ENCODE measurements at regions of chr19 and their contacts with region 1.

Region 1: GRCh38 chr19:52853880-52854279 is 3.5 kb downstream of the ZNF468 start:
- DNase-seq: no peak
- ATAC-seq: no peak
- H3K4me3 ChIP-seq: no peak overlapping the region
- H3K27ac ChIP-seq: no peak overlapping the region
- H3K4me1 ChIP-seq: peaks cover 3% of the 10 kb centered on the region
- H3K27me3 ChIP-seq: no peaks in the 10 kb centered on the region
- CTCF ChIP-seq: no peak
- POLR2A ChIP-seq: no peak
- RAD21 ChIP-seq: no peak

Region 2: GRCh38 chr19:52942386-52943133 is 88.7 kb after region 1 on chr19:
- CTCF ChIA-PET with region 1: no interaction called
- POLR2A ChIA-PET with region 1: no interaction called
- dilution Hi-C with region 1: no loop called
- in situ Hi-C with region 1: no loop called
- intact Hi-C with region 1: loop called (anchors 2 kb)
- DNase-seq: peak; percentile 75
- ATAC-seq: peak; percentile 99
- H3K4me3 ChIP-seq: peak overlapping the region; percentile 74
- H3K27ac ChIP-seq: peak overlapping the region; percentile 62
- H3K4me1 ChIP-seq: no peaks in the 10 kb centered on the region
- H3K27me3 ChIP-seq: no peaks in the 10 kb centered on the region
- CTCF ChIP-seq: no peak
- POLR2A ChIP-seq: peak; percentile 71
- RAD21 ChIP-seq: no peak